Activated CD8-positive, alpha-beta memory T cell treated with anti-CD3 and anti-CD28 coated beads, Interleukin-2, amount 10 ng/mL, durations not matched to agents 7 days and 5 days (primary cell): ENCODE measurements at regions of chr14 and their contacts with region 1.

Region 1: GRCh38 chr14:71753126-71753830 is 179.0 kb upstream of the RGS6 start:
- DNase-seq: peak; percentile 78
- ATAC-seq: peak; percentile 81
- H3K4me3 Mint-ChIP-seq: no peak overlapping the region
- H3K27ac Mint-ChIP-seq: no peak overlapping the region
- H3K4me1 Mint-ChIP-seq: peaks cover 20% of the 10 kb centered on the region
- H3K27me3 Mint-ChIP-seq: peaks cover 2% of the 10 kb centered on the region

Region 2: DNA sequence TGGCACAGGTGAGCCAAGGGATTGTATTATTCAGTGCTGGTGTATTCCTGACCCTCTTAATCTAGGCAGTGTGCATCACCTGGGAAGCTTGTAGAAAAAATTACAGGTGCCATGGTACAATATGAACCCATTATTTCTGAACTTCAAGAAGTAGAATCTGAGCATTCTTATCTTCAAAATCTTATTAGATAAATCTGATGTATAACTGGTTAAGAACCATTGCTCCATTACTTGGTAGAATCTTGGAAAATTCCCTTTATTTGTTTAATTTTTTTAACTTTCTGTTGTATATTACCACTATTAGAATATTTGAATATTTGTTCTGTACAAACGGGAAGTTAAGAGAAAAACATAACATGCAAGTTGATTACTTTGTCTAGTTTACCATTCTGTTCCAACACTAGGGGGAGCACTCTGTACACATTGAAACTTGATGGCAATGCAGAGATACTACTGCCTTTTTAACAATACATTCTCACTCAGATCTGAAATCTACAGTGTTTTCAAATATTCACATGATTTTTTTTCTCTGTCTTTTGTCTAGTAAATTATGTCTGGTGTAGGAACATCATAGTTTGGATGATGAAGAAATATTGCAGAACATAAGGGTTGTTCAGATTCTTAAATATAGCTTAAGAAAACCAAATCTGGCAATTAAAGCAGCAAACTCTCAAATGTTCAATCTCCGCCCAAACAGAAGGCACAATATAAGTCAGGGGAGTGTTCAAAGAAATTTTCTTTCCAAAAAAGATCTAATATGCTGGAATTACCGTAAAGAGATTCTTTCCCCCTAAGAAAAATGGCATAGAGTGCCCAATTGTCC is 649.4 kb before region 1 on chr14:
- CTCF ChIA-PET with region 1: interaction called, 16 read pairs
- DNase-seq: no peak
- ATAC-seq: no peak
- H3K4me3 Mint-ChIP-seq: no peak overlapping the region
- H3K27ac Mint-ChIP-seq: no peak overlapping the region
- H3K4me1 Mint-ChIP-seq: peaks cover 3% of the 10 kb centered on the region
- H3K27me3 Mint-ChIP-seq: no peaks in the 10 kb centered on the region

Region 3: GRCh38 chr14:71320107-71320733 is 433.1 kb before region 1 on chr14:
- CTCF ChIA-PET with region 1: interaction called, 24 read pairs
- DNase-seq: peak; percentile 99
- ATAC-seq: peak; percentile 86
- H3K4me3 Mint-ChIP-seq: peak within 1 kb of the TSS; percentile 90
- H3K27ac Mint-ChIP-seq: peak within 1 kb of the TSS; percentile 90
- H3K4me1 Mint-ChIP-seq: peaks cover 44% of the 10 kb centered on the region
- H3K27me3 Mint-ChIP-seq: no peaks in the 10 kb centered on the region

Region 4: DNA sequence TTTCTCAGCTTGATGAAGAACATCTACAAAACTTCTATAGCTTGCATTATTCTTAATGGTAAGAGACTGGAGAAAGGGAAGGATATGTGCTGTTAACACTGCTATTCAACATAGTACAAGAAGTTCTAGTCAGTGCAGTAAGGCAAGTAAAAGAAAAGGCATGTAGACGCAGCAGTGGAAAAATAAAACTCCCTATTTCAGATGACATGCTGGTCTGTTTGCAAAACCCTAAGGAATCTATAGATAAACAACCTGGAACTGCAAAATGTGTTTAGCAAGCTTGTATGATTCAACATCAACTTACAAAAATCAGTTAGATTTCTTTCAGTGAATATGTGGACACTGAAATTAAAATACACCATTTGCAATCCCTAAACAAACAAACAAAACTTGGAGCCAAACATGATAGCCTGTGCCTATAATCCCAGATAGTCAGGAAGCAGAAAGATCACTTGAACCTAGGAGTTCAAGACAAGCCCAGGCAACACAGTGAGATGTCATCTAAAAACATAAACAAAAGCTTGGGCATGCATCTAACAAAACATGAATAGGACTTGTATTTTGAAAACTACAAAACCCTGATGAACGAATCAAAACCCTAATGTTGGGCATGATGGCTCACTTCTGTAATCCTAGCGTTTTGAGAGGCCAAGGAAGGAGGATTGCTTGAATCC is 114.6 kb before region 1 on chr14:
- CTCF ChIA-PET with region 1: no interaction called
- DNase-seq: no peak
- ATAC-seq: no peak
- H3K4me3 Mint-ChIP-seq: no peak overlapping the region
- H3K27ac Mint-ChIP-seq: no peak overlapping the region
- H3K4me1 Mint-ChIP-seq: peaks cover 7% of the 10 kb centered on the region
- H3K27me3 Mint-ChIP-seq: no peaks in the 10 kb centered on the region